MCF 10A (cell line): ENCODE measurements at regions of chr1 and their contacts with region 1.

Region 1: GRCh38 chr1:216221260-216221700 is 202.0 kb downstream of the USH2A start:
- DNase-seq: peak; percentile 90
- H3K4me3 Mint-ChIP-seq: peak overlapping the region; percentile 65
- H3K27ac Mint-ChIP-seq: no peak overlapping the region
- H3K4me1 Mint-ChIP-seq: no peaks in the 10 kb centered on the region
- H3K27me3 Mint-ChIP-seq: peaks cover 74% of the 10 kb centered on the region
- CTCF ChIP-seq: peak; percentile 92

Region 2: DNA sequence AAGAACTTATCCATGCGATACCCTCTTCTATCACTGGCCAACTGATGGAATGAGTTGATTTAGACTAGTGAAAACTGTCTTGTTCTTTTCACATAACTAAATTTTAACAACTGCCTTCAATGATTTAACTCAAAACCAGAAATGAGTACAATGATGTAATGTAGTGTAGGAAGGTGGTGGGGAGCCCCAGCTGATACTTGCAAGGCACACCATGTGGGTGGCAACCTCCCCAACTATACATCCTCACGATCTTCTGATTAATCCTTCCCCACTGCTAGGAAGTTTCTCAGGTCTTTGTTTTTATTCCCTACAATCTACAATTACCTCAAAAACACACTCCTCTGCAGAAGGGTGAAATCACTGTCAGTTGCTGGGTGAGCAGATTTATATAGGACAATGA is 553.5 kb before region 1 on chr1:
- CTCF ChIA-PET with region 1: interaction called, 10 read pairs
- POLR2A ChIA-PET with region 1: no interaction called
- intact Hi-C with region 1: no loop called
- DNase-seq: no peak
- H3K4me3 Mint-ChIP-seq: no peak overlapping the region
- H3K27ac Mint-ChIP-seq: no peak overlapping the region
- H3K4me1 Mint-ChIP-seq: no peaks in the 10 kb centered on the region
- H3K27me3 Mint-ChIP-seq: peaks cover 15% of the 10 kb centered on the region
- CTCF ChIP-seq: no peak

Region 3: GRCh38 chr1:215824245-215824644 is 397.0 kb before region 1 on chr1:
- CTCF ChIA-PET with region 1: no interaction called
- POLR2A ChIA-PET with region 1: no interaction called
- intact Hi-C with region 1: loop called (anchors 1 kb)
- DNase-seq: peak; percentile 32
- H3K4me3 Mint-ChIP-seq: no peak overlapping the region
- H3K27ac Mint-ChIP-seq: no peak overlapping the region
- H3K4me1 Mint-ChIP-seq: no peaks in the 10 kb centered on the region
- H3K27me3 Mint-ChIP-seq: peaks cover 96% of the 10 kb centered on the region
- CTCF ChIP-seq: peak; percentile 64

Region 4: DNA sequence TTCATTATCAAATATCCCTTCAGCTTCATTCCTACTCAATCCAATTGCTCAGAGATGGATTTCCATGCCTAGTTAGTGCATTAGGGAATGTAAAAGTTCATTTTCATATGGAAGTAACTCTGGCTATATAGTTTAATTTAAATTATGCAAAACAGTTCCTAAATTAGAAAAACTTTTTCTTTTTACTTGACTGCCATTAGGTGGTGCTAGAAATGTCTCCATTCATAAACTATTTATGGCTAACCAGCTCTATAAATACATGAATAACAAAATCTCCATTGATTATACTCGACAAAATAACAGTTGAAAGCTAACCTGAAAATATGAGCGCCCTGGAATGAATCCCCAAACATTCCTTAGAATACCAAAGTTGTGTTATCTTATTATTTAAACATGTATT is 109.4 kb before region 1 on chr1:
- CTCF ChIA-PET with region 1: interaction called, 26 read pairs
- POLR2A ChIA-PET with region 1: no interaction called
- intact Hi-C with region 1: no loop called
- DNase-seq: no peak
- H3K4me3 Mint-ChIP-seq: no peak overlapping the region
- H3K27ac Mint-ChIP-seq: no peak overlapping the region
- H3K4me1 Mint-ChIP-seq: no peaks in the 10 kb centered on the region
- H3K27me3 Mint-ChIP-seq: peaks cover 94% of the 10 kb centered on the region
- CTCF ChIP-seq: peak; percentile 43

Region 5: GRCh38 chr1:216193839-216194439 is 27.3 kb before region 1 on chr1:
- CTCF ChIA-PET with region 1: interaction called, 22 read pairs
- POLR2A ChIA-PET with region 1: no interaction called
- intact Hi-C with region 1: no loop called
- DNase-seq: peak; percentile 40
- H3K4me3 Mint-ChIP-seq: no peak overlapping the region
- H3K27ac Mint-ChIP-seq: no peak overlapping the region
- H3K4me1 Mint-ChIP-seq: no peaks in the 10 kb centered on the region
- H3K27me3 Mint-ChIP-seq: peaks cover 90% of the 10 kb centered on the region
- CTCF ChIP-seq: peak; percentile 45

Region 6: GRCh38 chr1:216250861-216251260 is 29.6 kb after region 1 on chr1:
- CTCF ChIA-PET with region 1: interaction called, 28 read pairs
- POLR2A ChIA-PET with region 1: no interaction called
- intact Hi-C with region 1: no loop called
- DNase-seq: no peak
- H3K4me3 Mint-ChIP-seq: no peak overlapping the region
- H3K27ac Mint-ChIP-seq: no peak overlapping the region
- H3K4me1 Mint-ChIP-seq: no peaks in the 10 kb centered on the region
- H3K27me3 Mint-ChIP-seq: peaks cover 85% of the 10 kb centered on the region
- CTCF ChIP-seq: no peak

Region 7: DNA sequence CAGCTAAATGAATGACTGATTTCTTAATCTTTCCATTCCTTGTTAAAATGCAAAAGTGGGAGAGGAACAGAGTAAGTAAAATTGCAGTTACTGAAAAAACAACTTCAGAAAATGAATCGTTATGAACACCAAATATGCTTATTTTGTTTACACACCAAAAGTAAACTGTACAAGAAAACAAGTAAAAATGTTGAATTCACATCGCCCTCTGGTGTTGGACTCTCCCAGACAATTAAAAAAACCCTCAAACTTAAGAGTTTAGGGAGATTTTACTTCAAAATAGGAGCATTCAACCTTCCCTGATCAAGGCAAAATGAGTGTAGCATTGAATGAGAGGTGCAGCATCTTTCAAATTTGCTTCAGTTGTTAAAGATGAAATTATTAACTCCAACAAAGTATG is 521.3 kb after region 1 on chr1:
- CTCF ChIA-PET with region 1: interaction called, 10 read pairs
- POLR2A ChIA-PET with region 1: no interaction called
- intact Hi-C with region 1: loop called (anchors 2 kb)
- DNase-seq: peak; percentile 34
- H3K4me3 Mint-ChIP-seq: no peak overlapping the region
- H3K27ac Mint-ChIP-seq: no peak overlapping the region
- H3K4me1 Mint-ChIP-seq: no peaks in the 10 kb centered on the region
- H3K27me3 Mint-ChIP-seq: peaks cover 59% of the 10 kb centered on the region
- CTCF ChIP-seq: peak; percentile 66